ENCODE measurements at regions of chr11 and their contacts with region 1.

Region 1: DNA sequence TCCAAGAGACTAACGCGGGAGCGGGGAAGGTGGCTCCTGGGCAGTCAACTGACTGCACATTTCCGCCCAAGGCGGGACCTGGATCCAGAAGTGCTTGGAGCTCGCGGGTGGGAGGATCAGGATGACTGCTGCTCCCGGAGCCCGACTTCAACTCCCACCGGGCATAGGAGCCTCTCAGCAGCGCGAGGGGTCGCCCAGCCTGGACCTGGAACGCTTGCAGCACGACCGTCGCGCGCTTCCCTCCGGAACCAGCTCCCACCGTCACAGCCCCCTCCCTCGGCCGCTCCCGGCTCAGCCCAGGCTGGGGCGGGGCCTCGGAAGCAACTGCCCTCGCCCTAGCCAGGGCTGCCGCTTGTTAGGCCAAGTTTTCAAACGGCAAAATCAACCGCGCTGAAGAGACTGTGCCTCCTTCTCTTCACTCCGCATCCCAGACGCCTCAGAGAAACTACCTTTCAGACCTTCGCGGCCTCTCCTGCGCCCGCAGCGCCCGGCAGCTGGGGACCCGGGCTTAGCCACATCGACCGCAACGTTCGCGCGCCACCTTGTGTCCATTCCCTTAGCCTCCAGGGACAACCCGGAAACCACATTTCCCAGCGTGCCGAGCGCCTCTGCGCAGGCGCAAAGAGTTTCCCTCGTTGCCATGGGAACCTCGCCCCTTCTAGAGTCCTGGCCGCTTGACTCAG is 14.0 kb downstream of the SSH3 start:
- DNase-seq: peak; percentile 98
- H3K27ac ChIP-seq: peak overlapping the region; percentile 99
- CTCF ChIP-seq: peak; percentile 88

Region 2: DNA sequence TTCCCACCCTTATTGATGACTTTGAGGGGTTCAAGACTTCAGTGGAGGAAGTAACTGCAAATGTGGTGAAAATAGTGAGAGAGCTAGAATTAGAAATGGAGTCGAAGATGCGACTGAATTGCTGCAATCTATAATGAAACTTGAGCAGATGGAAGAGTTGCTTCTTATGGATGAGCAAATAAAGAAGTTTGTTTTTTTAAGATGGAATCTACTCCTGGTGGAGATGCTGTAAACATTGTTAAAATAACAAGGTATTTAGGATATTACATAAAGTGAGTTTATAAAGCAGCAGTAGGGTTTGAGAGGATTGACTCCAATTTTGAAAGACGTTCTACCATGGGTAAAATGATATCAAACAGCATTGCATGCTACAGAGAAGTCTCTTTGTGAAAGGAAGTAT is 115.3 kb before region 1 on chr11:
- CTCF ChIA-PET with region 1: no interaction called
- POLR2A ChIA-PET with region 1: no interaction called
- DNase-seq: no peak
- H3K27ac ChIP-seq: no peak overlapping the region
- CTCF ChIP-seq: no peak

Region 3: DNA sequence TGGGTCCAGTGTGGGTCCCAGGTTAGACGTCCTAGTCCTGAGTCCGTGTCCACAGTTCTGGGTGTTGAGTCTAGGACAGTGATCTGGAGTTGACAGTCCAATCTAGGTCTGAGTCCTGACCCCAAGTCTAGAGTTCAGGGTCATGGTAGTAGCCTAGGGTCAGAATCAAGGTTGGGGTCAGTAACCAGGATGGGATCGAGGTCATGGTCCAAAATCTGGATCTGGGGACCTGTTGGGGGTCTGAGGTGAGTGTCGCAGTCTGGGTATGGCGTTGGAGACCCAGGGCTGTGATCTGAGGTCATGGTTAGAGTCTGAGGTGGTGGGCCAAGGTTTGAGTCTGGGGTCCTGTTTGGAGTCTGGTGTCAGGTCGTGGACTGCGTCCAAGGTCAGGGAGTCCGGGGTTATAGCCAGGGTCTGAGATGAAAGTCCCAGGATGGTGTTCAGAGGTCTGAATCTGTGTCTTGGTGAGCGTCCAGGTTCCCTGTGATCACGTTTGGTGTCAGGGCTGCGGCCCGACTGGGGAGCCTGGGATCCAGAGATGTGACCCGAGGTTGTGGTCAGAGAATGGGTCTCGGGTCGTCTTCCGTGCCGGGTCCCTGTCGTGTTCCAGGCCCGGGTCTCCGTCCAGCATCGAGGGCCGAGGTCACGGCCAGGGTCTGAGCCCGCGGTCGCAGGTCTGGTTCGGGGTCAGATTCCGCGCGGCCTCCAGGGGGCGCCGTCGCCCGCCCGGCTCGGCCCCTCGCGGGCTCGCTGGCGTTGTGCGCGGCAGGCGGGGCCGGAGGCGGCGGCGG is 51.5 kb before region 1 on chr11:
- CTCF ChIA-PET with region 1: interaction called, 27 read pairs
- POLR2A ChIA-PET with region 1: interaction called, 3 read pairs
- DNase-seq: peak; percentile 70
- H3K27ac ChIP-seq: peak overlapping the region; percentile 96
- CTCF ChIP-seq: peak; percentile 84

Region 4: DNA sequence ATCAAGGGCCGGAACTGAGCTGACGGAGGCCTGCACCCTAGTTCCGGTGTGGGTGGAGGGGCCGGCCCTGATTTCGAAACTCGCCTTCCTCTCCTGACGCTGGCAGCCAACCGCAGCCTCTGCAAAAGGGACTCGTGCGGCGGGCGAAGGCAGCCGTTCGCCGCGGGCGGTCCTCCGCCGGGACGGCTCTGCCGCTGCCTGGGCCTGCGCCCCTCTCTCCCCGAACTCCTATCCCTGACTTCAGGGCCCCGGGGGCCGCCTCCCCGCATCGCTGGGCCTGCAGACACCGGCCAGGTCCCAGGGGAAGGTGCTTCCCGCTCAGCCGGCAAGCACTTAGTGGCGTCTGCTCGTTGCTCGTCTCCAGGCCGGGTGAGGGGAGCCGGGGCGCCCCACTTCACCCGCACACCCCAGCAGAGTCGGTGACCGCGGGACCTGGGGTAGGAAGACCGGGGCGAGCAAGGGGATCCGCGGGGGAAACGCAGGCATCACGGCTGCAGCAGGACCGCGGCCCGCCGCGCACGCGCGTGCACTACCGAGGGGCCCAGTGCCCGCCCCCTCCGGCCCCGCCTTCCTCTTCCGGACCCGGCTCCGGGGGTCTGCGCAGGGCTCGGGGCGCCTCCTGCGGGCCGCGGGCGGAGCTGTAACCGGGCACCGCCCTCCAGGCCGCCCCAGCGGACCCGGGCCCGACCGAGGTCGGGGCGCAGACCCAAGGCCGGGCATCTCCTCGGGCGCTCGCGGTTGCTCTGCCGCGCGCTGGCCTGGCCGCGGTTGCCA is 28.7 kb before region 1 on chr11:
- CTCF ChIA-PET with region 1: interaction called, 13 read pairs
- POLR2A ChIA-PET with region 1: no interaction called
- DNase-seq: peak; percentile 71
- H3K27ac ChIP-seq: peak overlapping the region; percentile 98
- CTCF ChIP-seq: peak; percentile 30

Region 5: GRCh38 chr11:67303132-67303834 is 14.1 kb before region 1 on chr11 and contains the start of gene SSH3:
- CTCF ChIA-PET with region 1: interaction called, 13 read pairs
- POLR2A ChIA-PET with region 1: interaction called, 16 read pairs
- DNase-seq: peak; percentile 73
- H3K27ac ChIP-seq: peak within 1 kb of the TSS; percentile 99
- CTCF ChIP-seq: no peak

Region 6: GRCh38 chr11:67382276-67383136 is 65.2 kb after region 1 on chr11:
- CTCF ChIA-PET with region 1: interaction called, 13 read pairs
- POLR2A ChIA-PET with region 1: no interaction called
- DNase-seq: peak; percentile 71
- H3K27ac ChIP-seq: peak overlapping the region; percentile 31
- CTCF ChIP-seq: peak; percentile 97